H1 (cell line): ENCODE measurements at regions of chr14 and their contacts with region 1.

Region 1: DNA sequence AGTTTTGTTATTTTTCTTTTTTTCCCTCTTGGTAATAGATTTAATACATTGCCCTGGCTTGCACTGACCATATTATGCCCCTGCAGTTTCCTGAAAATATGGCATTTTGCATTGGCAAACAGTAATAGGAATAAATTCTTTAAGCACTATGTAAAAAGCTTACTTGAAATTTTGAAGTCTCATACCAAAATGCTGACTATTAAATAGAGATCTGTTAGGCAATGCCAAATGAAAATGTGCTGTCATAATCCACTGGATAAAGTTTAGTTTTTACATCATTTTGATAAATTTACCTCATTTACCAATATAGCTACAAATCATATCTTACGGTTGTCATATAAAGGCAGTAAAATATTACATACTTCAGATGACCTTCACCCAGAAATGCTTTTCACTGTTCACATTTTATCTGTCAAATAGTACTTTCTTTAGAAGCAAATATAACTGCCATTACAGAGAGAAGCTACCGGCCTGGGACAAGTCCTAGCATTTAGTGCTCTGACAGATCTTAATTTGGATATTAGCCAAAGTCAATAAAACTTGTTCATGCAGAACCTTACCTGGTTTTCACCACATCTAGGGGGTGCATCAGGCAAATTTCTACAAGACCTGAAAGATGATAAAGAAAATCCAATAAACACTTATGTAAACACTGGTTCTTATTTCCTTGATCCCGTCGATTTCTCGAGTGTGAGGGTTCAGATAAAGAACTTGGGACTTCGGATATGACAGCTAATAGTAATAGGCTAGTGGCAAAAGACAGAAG is 212.9 kb downstream of the PAX9 start:
- DNase-seq: no peak
- H3K4me3 ChIP-seq: no peak overlapping the region
- H3K27ac ChIP-seq: no peak overlapping the region
- H3K4me1 ChIP-seq: no peaks in the 10 kb centered on the region
- H3K27me3 ChIP-seq: no peaks in the 10 kb centered on the region
- CTCF ChIP-seq: no peak
- EP300 ChIP-seq: no peak
- POLR2A ChIP-seq: no peak
- RAD21 ChIP-seq: no peak

Region 2: GRCh38 chr14:36863271-36863670 is 11.3 kb before region 1 on chr14:
- CTCF ChIA-PET with region 1: interaction called, 14 read pairs
- POLR2A ChIA-PET with region 1: no interaction called
- DNase-seq: no peak
- H3K4me3 ChIP-seq: no peak overlapping the region
- H3K27ac ChIP-seq: no peak overlapping the region
- H3K4me1 ChIP-seq: no peaks in the 10 kb centered on the region
- H3K27me3 ChIP-seq: no peaks in the 10 kb centered on the region
- CTCF ChIP-seq: peak in 1 of 3 experiments; percentile 4; a peak in 1 of 4 replicates
- EP300 ChIP-seq: no peak
- POLR2A ChIP-seq: no peak
- RAD21 ChIP-seq: no peak

Region 3: GRCh38 chr14:36901861-36902260 is 27.3 kb after region 1 on chr14:
- CTCF ChIA-PET with region 1: no interaction called
- POLR2A ChIA-PET with region 1: no interaction called
- DNase-seq: no peak
- H3K4me3 ChIP-seq: no peak overlapping the region
- H3K27ac ChIP-seq: no peak overlapping the region
- H3K4me1 ChIP-seq: no peaks in the 10 kb centered on the region
- H3K27me3 ChIP-seq: no peaks in the 10 kb centered on the region
- CTCF ChIP-seq: no peak
- EP300 ChIP-seq: no peak
- POLR2A ChIP-seq: no peak
- RAD21 ChIP-seq: no peak